ENCODE measurements at regions of chr4 and their contacts with region 1.

Region 1: DNA sequence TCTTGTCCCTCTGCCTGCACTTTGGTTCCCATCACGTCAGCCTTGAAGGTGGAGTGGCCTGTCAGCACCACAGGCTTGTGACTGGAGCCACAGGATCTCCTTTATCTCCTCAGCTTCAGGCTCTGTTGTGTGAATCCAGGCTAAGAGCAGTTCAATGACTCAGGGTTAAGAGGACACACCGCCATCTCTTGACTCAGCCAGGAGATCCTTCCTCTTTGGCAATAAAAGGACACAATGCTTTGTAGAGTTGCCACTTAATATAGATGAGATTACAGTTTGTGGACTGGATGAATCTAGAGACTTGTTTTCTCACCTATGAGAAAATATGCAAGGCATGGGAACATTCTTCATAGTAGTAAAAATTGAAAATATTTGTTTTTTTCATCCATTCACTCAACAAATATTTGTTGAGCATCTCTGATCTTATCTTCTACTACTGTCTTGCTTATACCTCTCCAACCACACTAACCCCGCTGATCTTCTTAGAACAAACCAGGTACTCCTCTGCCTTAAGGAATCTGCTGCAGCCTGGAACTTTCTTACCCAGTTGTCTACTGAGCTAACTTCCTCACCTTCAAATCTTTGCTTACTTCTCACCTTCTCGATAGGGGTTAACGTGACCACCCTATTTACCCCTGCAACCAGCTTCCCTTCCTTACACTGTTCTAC is 62.3 kb downstream of the UCHL1 start:
- DNase-seq: no peak
- H3K4me3 ChIP-seq: no peak overlapping the region
- H3K27ac ChIP-seq: no peak overlapping the region
- H3K4me1 ChIP-seq: no peaks in the 10 kb centered on the region
- CTCF ChIP-seq: no peak

Region 2: DNA sequence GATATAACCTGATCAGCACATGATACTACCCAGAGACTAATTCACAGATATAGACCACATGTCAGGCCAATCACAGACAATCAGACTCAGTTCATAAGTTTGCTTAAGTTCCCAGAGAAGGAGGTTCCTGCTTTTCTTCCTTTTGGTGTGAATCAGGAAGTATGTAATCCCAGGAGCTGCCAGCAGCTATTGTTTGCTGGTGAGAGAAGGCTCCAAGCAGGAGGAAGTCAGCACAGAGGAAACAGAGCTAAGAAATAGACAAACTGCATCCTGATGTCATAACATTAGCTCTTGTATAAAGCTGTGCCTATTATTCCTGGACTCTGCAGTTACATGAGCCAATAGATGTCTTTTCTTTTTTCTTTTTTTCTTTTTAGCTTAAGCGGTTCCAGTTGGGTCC is 11.4 kb before region 1 on chr4:
- CTCF ChIA-PET with region 1: interaction called, 12 read pairs
- POLR2A ChIA-PET with region 1: no interaction called
- intact Hi-C with region 1: no loop called
- DNase-seq: no peak
- H3K4me3 ChIP-seq: no peak overlapping the region
- H3K27ac ChIP-seq: no peak overlapping the region
- H3K4me1 ChIP-seq: no peaks in the 10 kb centered on the region
- CTCF ChIP-seq: no peak